Heart left ventricle (tissue), 16 donors: ENCODE measurements at regions of chr3 and their contacts with region 1.

Region 1: GRCh38 chr3:159787794-159788205 is 200.8 kb upstream of the IL12A start:
- DNase-seq: no peak
- ATAC-seq: peak in 2 of 4 donors; percentile 24 to 47
- H3K4me3 ChIP-seq: no peak overlapping the region
- H3K27ac ChIP-seq: peak overlapping the region in 7 of 12 donors; percentile 3 to 71 (median 15)
- H3K4me1 ChIP-seq: peaks cover 0 to 51% (median 25%) of the 10 kb centered on the region in 12 donors
- H3K27me3 ChIP-seq: no peaks in the 10 kb centered on the region
- CTCF ChIP-seq: no peak
- POLR2A ChIP-seq: no peak

Region 2: DNA sequence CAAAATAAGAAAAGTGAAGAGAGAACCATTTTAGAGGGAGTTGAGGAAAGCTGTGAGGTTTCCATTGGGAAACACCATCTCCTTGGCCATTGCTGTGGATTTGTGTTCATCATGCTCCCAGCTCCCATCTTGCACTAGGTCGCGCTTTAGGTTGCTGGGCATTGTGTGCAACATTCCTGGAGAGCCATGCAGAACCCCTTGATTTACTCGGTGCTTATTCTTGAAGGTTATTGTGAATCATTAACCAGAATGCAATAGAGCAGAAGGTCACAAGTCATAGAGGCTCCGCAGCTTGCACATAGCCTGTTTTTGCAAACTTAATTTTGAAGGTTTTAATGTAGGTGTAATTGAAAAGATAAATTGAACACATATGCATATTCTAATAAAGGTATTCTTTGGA is 38.4 kb before region 1 on chr3:
- intact Hi-C with region 1: no loop called
- DNase-seq: no peak
- ATAC-seq: no peak
- H3K4me3 ChIP-seq: no peak overlapping the region
- H3K27ac ChIP-seq: no peak overlapping the region
- H3K4me1 ChIP-seq: peaks cover 0 to 3% (median 0%) of the 10 kb centered on the region in 12 donors
- H3K27me3 ChIP-seq: no peaks in the 10 kb centered on the region
- CTCF ChIP-seq: no peak
- POLR2A ChIP-seq: no peak

Region 3: GRCh38 chr3:159771865-159772611 is 15.8 kb before region 1 on chr3:
- intact Hi-C with region 1: loop called in 1 of 10 experiments (anchors 1 kb)
- DNase-seq: no peak
- ATAC-seq: no peak
- H3K4me3 ChIP-seq: no peak overlapping the region
- H3K27ac ChIP-seq: no peak overlapping the region
- H3K4me1 ChIP-seq: peaks cover 0 to 61% (median 28%) of the 10 kb centered on the region in 12 donors
- H3K27me3 ChIP-seq: no peaks in the 10 kb centered on the region
- CTCF ChIP-seq: no peak
- POLR2A ChIP-seq: no peak